ENCODE measurements at regions of chr1 and their contacts with region 1.

Region 1: GRCh38 chr1:9455487-9456234 is 83.6 kb upstream of the SLC25A33 start:
- DNase-seq: peak; percentile 74
- H3K4me3 Mint-ChIP-seq: no peak overlapping the region
- H3K27ac Mint-ChIP-seq: no peak overlapping the region
- H3K4me1 Mint-ChIP-seq: no peaks in the 10 kb centered on the region
- H3K27me3 Mint-ChIP-seq: no peaks in the 10 kb centered on the region

Region 2: DNA sequence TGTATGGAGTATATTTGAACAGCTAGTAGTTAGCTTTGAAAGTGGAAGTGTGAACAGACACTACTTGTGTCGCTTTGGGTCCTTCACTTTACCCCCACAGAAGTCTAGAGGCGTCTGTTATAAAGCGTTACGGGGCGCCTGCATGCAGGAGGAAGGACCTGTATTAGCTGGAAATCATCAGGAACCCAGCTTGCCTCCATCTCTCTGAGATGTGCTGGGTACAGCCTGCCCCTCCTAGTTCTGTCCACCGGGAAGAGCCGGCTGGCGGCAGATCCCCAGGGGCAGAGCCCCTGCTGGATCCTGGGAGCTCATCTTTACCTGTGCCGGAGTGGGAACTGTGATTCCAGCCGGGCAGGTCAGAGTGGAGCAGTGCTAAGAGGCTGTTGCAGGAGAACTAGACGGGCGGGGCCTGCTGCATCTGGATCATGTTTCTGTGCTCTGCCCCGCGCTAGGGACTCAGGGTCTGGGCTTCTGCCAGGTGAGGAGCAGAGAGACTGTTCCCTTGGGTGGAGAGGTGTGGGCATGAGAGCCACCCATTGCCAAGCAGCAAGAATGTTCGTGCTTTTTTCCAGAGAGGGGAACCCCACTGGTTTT is 185.3 kb before region 1 on chr1:
- CTCF ChIA-PET with region 1: interaction called, 88 read pairs
- POLR2A ChIA-PET with region 1: no interaction called
- intact Hi-C with region 1: loop called (anchors 1 kb)
- DNase-seq: no peak
- H3K4me3 Mint-ChIP-seq: no peak overlapping the region
- H3K27ac Mint-ChIP-seq: no peak overlapping the region
- H3K4me1 Mint-ChIP-seq: peaks cover 9% of the 10 kb centered on the region
- H3K27me3 Mint-ChIP-seq: peaks cover 3% of the 10 kb centered on the region

Region 3: DNA sequence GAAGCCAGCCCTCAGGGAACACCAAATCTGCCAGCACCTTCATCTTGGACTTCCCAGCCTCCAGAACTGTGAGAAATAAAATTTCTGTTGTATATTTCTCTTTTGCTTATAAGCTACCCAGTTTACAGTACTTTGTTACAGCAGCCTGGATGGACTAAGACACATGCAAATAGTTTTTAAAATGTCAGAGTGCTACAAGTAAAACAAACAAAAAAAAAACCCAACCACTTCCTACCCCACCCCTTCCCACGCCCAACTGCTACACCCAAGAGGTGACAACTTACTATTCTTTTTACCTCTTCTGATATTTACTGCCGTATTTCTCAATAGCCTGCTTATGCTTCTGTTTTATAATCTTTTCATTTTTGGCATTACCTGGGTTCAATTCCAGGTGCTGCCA is 171.6 kb before region 1 on chr1:
- CTCF ChIA-PET with region 1: interaction called, 186 read pairs
- POLR2A ChIA-PET with region 1: no interaction called
- intact Hi-C with region 1: loop called (anchors 1 kb)
- DNase-seq: no peak
- H3K4me3 Mint-ChIP-seq: no peak overlapping the region
- H3K27ac Mint-ChIP-seq: no peak overlapping the region
- H3K4me1 Mint-ChIP-seq: peaks cover 46% of the 10 kb centered on the region
- H3K27me3 Mint-ChIP-seq: peaks cover 8% of the 10 kb centered on the region